Pancreas (tissue), 10 donors: ENCODE measurements at regions of chr5 and their contacts with region 1.

Region 1: DNA sequence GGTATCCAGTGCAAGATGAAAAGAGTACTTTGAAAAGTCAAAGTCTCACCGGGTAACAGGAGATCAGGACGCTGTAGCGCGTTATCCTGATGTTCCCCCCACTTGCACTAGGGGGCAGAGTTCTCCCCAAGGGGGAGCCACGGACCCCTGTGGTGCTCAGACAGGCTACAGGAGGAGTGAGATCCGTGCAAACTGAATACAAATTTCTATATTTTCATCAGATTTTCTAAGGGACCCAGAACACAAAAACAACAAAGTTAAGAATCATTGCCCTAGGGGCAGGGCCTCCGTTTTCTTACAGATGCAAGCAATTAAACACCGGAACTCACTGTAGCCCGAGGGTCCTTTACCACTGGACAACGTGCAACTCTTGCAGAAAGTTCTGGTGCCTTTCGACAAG is 2.0 kb downstream of the MYO10 start:
- DNase-seq: peak in 5 of 6 donors; percentile 56 to 84 (median 67)
- ATAC-seq: peak; percentile 26 to 59 (median 52)
- H3K4me3 ChIP-seq: peak overlapping the region; percentile 62 to 95 (median 80)
- H3K27ac ChIP-seq: no peak overlapping the region
- H3K4me1 ChIP-seq: peaks cover 16 to 32% (median 27%) of the 10 kb centered on the region in 3 donors
- H3K27me3 ChIP-seq: no peaks in the 10 kb centered on the region
- CTCF ChIP-seq: peak; percentile 77 to 87 (median 82)

Region 2: DNA sequence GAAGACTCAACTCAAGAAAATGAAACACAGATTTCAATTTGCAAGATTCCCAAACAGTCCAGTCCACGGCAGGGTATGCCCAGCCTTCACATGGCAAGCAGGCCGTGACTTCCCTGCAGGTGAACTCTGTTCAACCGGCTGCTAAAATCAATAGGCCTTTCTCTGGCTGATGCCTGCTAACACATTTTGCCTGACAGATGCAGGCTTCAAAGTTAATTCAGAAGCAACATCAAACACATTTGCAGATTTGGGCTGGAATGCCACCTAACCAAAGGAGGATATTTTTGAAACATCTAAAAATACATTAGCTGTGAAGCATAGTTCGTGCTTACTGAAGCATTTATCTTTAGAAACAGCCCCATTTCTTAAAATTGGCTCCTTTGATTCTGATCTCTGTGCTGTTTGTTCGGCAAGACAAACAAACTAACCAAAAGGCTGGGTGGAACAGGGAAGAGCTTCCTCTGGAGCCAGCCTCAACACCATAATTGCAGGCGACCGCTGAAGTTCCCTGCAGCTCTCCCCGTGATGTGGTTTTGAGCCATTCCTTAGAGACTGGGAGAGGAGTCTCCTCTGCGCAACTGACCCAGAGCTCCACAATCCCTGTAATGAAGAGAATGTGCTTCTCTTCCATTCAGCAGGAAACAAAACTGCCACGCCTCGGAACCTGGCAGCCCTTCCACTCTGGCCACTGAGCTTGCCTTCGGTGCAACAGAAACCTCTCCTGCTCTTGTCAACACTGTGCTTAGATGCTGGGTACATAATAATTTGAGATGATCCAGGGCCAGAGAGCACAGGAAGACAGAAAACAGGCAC is 124.5 kb before region 1 on chr5:
- intact Hi-C with region 1: loop called in 1 of 3 experiments (anchors 10 kb)
- DNase-seq: no peak
- ATAC-seq: peak in 3 of 4 donors; percentile 42 to 54 (median 52)
- H3K4me3 ChIP-seq: no peak overlapping the region
- H3K27ac ChIP-seq: peak overlapping the region in 3 of 4 donors; percentile 4 to 13 (median 10)
- H3K4me1 ChIP-seq: peaks cover 17 to 42% (median 26%) of the 10 kb centered on the region in 3 donors
- H3K27me3 ChIP-seq: no peaks in the 10 kb centered on the region
- CTCF ChIP-seq: no peak

Region 3: GRCh38 chr5:17132444-17133083 is 198.4 kb after region 1 on chr5:
- intact Hi-C with region 1: loop called in 1 of 3 experiments (anchors 10 kb)
- DNase-seq: no peak
- ATAC-seq: peak in 3 of 4 donors; percentile 60 to 69 (median 65)
- H3K4me3 ChIP-seq: no peak overlapping the region
- H3K27ac ChIP-seq: no peak overlapping the region
- H3K4me1 ChIP-seq: no peaks in the 10 kb centered on the region
- H3K27me3 ChIP-seq: no peaks in the 10 kb centered on the region
- CTCF ChIP-seq: peak; percentile 26 to 68 (median 53)

Region 4: GRCh38 chr5:17204133-17204489 is 270.0 kb after region 1 on chr5:
- intact Hi-C with region 1: no loop called
- DNase-seq: no peak
- ATAC-seq: no peak
- H3K4me3 ChIP-seq: no peak overlapping the region
- H3K27ac ChIP-seq: no peak overlapping the region
- H3K4me1 ChIP-seq: no peaks in the 10 kb centered on the region
- H3K27me3 ChIP-seq: peaks cover 0 to 5% (median 2%) of the 10 kb centered on the region in 4 donors
- CTCF ChIP-seq: no peak